Pancreas (tissue), 10 donors: ENCODE measurements at regions of chr13 and their contacts with region 1.

Region 1: GRCh38 chr13:110944121-110944967 is 29.5 kb upstream of the ANKRD10 start:
- DNase-seq: peak in 4 of 6 donors; percentile 33 to 67 (median 54)
- ATAC-seq: peak; percentile 72 to 99 (median 98)
- H3K4me3 ChIP-seq: no peak overlapping the region
- H3K27ac ChIP-seq: no peak overlapping the region
- H3K4me1 ChIP-seq: no peaks in the 10 kb centered on the region
- H3K27me3 ChIP-seq: no peaks in the 10 kb centered on the region
- CTCF ChIP-seq: peak in 3 of 4 donors; percentile 38 to 45 (median 44)

Region 2: DNA sequence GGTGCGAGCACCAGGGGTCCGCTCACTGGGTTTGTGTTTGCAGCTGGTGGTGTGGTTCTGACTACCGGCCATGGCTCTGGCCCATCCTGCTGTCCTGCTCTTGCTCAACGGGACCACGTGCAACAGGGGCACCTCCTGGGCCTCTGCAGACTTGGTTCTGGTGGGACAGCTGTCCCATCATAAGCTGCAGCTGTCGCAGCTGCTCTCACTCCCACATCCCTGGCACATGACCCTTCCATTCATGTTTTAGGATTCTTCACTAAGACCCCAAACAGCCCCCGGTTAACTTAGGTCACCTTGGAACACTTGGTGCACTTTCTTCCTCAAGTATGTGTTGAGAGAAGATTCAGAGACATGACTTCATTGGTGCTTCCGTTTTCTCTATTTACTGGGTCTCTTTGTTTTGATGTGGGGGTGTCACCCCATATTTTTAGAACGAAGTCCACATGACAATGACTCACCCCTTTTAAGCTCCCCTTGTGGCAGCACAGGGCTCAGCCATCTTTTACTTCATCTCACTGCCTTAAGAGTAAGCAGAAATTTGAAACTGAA is 102.3 kb after region 1 on chr13:
- intact Hi-C with region 1: loop called in 2 of 3 experiments (anchors 5 to 10 kb)
- DNase-seq: no peak
- ATAC-seq: peak in 2 of 4 donors; percentile 30 to 53
- H3K4me3 ChIP-seq: no peak overlapping the region
- H3K27ac ChIP-seq: peak overlapping the region in 1 of 4 donors; percentile 28
- H3K4me1 ChIP-seq: no peaks in the 10 kb centered on the region
- H3K27me3 ChIP-seq: no peaks in the 10 kb centered on the region
- CTCF ChIP-seq: no peak

Region 3: DNA sequence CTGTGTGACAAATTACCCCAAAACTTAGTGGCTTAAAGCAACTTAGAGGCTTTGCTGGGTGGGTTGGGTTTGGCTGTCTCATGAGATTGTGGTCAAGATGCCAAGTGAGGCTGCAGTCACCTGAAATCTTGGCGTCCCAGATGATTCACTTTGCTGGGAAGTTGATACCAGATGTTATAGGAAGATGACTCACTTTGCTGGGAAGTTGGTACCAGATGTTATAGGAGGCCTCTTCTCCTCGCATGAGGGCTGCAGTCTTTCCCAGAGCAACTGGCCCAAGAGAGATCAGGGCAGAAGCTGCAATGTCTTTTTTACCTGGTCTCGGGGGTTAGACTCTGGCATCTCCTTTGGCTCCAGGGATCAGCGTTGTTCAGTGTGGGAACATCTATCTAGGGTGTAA is 392.9 kb after region 1 on chr13:
- intact Hi-C with region 1: no loop called
- DNase-seq: no peak
- ATAC-seq: no peak
- H3K4me3 ChIP-seq: no peak overlapping the region
- H3K27ac ChIP-seq: no peak overlapping the region
- H3K4me1 ChIP-seq: no peaks in the 10 kb centered on the region
- H3K27me3 ChIP-seq: no peaks in the 10 kb centered on the region
- CTCF ChIP-seq: no peak